ENCODE measurements at regions of chr4 and their contacts with region 1.

Region 1: GRCh38 chr4:174340714-174341113 is 57.0 kb downstream of the CEP44 start:
- DNase-seq: no peak
- ATAC-seq: no peak
- H3K4me3 ChIP-seq: no peak overlapping the region
- H3K27ac ChIP-seq: no peak overlapping the region
- H3K4me1 ChIP-seq: no peaks in the 10 kb centered on the region
- H3K27me3 ChIP-seq: no peaks in the 10 kb centered on the region
- CTCF ChIP-seq: no peak

Region 2: DNA sequence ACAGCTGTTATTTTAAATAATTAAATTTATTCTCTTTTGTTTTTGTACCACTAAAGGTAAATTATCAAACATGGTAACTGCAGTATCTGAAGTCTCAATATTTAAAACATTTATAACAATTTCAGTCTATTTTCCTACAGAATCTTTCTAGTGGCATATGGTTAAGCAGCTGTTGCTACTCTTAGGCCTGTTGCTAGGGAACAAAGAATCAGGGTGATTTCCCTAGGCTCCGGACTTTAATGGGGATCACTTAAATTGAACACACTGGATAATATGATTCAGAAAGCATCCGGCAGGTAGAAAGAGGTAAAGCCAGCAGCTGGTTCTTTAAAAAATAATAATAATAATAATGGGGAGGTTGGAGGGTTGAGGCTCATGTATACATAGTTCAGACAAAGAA is 74.8 kb before region 1 on chr4:
- intact Hi-C with region 1: no loop called
- DNase-seq: no peak
- ATAC-seq: no peak
- H3K4me3 ChIP-seq: no peak overlapping the region
- H3K27ac ChIP-seq: no peak overlapping the region
- H3K4me1 ChIP-seq: peaks cover 0 to 43% (median 25%) of the 10 kb centered on the region in 9 donors
- H3K27me3 ChIP-seq: no peaks in the 10 kb centered on the region
- CTCF ChIP-seq: no peak

Region 3: DNA sequence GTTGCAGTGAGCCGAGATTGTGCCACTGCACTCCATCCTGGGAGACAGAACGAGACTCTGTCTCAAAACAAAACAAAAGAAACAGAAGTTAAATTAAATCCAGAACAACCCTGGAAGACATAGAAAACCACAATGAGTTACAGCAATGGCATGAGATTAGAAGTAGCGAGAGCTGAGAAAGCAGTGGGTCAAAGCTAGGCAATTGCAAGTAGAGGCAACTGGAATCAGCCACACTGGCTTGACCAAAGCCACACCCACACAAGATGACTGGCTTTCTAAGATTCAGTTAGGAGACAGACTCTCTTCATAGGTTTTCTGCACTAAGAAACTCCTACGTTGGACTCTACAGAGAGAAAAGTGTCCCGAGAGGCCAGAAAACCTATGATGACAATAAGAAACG is 1028.4 kb after region 1 on chr4:
- intact Hi-C with region 1: loop called in 1 of 10 experiments (anchors 5 kb)
- DNase-seq: no peak
- ATAC-seq: no peak
- H3K4me3 ChIP-seq: no peak overlapping the region
- H3K27ac ChIP-seq: no peak overlapping the region
- H3K4me1 ChIP-seq: no peaks in the 10 kb centered on the region
- H3K27me3 ChIP-seq: no peaks in the 10 kb centered on the region
- CTCF ChIP-seq: no peak